ENCODE measurements at regions of chr1 and their contacts with region 1.

Region 1: DNA sequence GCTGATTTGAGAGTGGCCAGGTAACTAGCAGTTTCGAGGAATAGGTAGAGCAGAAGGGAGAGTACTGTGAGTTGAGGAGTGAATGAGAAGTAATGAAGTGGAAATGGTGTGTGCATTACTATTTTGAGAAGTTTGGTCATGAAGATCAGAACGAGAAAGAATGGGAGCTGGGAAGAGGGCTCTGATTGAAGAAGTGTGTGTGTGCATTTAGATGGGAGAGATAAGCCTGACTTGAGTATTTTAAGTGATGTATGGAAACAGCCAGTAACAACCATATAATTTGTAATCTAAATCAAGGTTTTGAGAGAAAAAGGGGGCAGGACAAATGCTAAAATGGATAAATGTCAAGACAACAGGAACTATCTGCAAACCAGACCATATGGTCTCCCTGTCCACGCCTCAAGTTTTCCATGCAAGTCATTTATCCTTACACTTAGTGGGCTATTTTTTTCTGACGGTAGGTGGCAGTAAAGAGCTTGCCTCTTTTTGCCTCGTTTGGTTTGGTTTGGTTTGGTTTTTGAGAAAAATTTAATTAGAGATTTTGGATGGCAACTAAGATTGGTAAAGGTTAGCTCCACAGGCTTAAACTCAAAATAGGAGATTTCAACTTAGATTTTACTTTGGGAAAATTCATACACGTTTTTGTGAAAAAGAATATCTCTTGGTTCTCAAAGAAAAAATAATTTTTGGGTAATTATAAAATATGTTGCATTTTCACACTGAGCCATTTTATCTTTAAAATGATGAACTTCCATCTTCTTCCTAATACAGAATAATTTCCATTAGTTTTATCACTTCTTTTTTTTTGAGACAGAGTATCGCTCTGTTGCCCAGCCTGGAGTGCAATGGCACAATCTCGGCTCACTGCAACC is 9.5 kb upstream of the B3GALNT2 start:
- DNase-seq: peak; percentile 69
- H3K4me3 Mint-ChIP-seq: no peak overlapping the region
- H3K27ac Mint-ChIP-seq: no peak overlapping the region
- H3K4me1 Mint-ChIP-seq: peaks cover 7% of the 10 kb centered on the region
- H3K27me3 Mint-ChIP-seq: peaks cover 14% of the 10 kb centered on the region
- CTCF ChIP-seq: peak; percentile 83

Region 2: GRCh38 chr1:235734335-235734734 is 220.6 kb after region 1 on chr1:
- CTCF ChIA-PET with region 1: no interaction called
- intact Hi-C with region 1: loop called (anchors 1 kb)
- DNase-seq: no peak
- H3K4me3 Mint-ChIP-seq: no peak overlapping the region
- H3K27ac Mint-ChIP-seq: no peak overlapping the region
- H3K4me1 Mint-ChIP-seq: no peaks in the 10 kb centered on the region
- H3K27me3 Mint-ChIP-seq: no peaks in the 10 kb centered on the region
- CTCF ChIP-seq: no peak

Region 3: GRCh38 chr1:235783148-235783776 is 269.5 kb after region 1 on chr1:
- CTCF ChIA-PET with region 1: interaction called, 5 read pairs
- intact Hi-C with region 1: loop called (anchors 1 kb)
- DNase-seq: peak; percentile 3
- H3K4me3 Mint-ChIP-seq: no peak overlapping the region
- H3K27ac Mint-ChIP-seq: no peak overlapping the region
- H3K4me1 Mint-ChIP-seq: no peaks in the 10 kb centered on the region
- H3K27me3 Mint-ChIP-seq: no peaks in the 10 kb centered on the region
- CTCF ChIP-seq: peak; percentile 48

Region 4: GRCh38 chr1:235843461-235843961 is 329.8 kb after region 1 on chr1:
- CTCF ChIA-PET with region 1: interaction called, 8 read pairs
- intact Hi-C with region 1: loop called (anchors 2 kb)
- DNase-seq: peak; percentile 20
- H3K4me3 Mint-ChIP-seq: no peak overlapping the region
- H3K27ac Mint-ChIP-seq: no peak overlapping the region
- H3K4me1 Mint-ChIP-seq: no peaks in the 10 kb centered on the region
- H3K27me3 Mint-ChIP-seq: no peaks in the 10 kb centered on the region
- CTCF ChIP-seq: peak; percentile 32